ENCODE measurements at regions of chr1 and their contacts with region 1.

Region 1: GRCh38 chr1:35564037-35564883 is 6.7 kb downstream of the NCDN start:
- DNase-seq: peak in 7 of 10 donors; percentile 73 to 94 (median 77)

Region 2: GRCh38 chr1:35451125-35451528 is 113.1 kb before region 1 on chr1:
- intact Hi-C with region 1: loop called (anchors 1 kb)
- DNase-seq: peak; percentile 68 to 97 (median 86)

Region 3: DNA sequence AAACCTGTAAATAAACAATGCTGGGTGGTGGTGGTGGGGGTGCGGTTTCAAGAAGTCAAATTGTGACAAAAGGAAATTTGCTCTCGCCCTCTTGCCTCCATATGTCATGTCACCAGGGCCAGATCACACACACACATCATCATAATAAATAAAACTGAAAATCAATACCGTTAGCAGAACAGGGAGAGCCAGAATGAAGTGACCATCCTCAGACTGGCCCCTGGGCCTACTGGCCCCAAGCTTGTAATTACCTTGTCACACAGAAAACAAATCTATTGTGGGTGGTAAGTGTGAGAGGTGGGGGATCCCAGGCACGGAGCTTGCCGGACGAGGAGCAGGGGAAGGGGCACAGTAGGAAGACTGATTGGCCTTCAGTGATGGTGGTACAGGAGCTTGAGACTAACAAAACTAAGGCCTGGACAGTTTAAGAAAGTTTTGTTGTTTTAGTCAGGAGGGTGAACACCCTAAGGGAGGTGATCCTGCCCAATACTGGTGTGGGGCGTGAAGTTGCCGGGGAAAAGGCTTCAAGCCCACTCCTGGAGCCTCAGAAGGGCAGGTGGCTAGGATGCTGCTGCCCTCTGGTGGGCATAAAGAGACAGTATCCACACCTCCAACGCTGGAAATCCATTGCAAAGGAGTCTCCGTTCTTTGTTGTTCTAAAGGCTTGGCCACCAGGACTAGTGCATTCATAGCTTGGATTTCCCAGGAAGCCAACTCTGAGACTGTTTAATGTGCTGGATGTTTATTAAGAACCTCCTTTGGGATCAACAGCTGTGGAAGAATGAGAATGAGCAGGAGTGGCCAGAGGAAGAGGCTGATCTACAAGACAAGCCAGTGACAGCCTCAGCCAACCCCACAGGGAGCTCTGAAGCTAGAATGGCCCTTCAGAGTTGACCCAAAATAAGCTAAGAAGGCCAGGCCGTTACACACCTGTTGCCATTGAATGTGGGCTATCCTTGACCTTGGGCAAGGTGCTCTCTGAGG is 162.5 kb after region 1 on chr1:
- intact Hi-C with region 1: loop called (anchors 1 kb)
- DNase-seq: peak in 8 of 10 donors; percentile 49 to 93 (median 69)

Region 4: GRCh38 chr1:35769759-35770446 is 205.6 kb after region 1 on chr1 and contains the start of gene CLSPN:
- intact Hi-C with region 1: loop called (anchors 5 kb)
- DNase-seq: peak; percentile 88 to 99 (median 94)

Measured in posterior cingulate gyrus (tissue), 11 donors.